ENCODE measurements at regions of chr10 and their contacts with region 1.

Region 1: DNA sequence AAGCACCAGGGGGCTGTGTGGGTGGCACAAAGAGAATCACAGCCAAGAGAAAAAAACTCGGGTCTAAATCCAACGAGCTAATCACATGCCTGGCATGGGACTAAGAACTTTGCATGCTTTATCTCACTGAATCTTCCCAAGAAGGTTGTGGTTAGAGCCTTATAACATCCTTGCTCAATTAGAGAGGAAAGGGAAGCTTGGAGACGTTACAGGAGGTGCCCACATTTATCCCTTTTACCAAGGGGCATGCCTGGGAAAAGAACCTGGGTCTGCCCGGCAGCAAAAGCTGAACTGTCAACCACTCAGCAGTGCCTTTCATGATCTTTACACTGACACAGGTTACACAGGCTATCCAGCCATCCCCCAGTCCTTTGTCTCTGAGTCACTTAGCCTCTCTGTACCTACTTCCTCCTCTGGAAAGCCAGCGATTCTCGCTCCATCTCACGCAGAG is 190.1 kb downstream of the PRPF18 start:
- DNase-seq: no peak

Region 2: GRCh38 chr10:13195016-13195415 is 581.9 kb before region 1 on chr10:
- intact Hi-C with region 1: no loop called
- DNase-seq: no peak

Region 3: DNA sequence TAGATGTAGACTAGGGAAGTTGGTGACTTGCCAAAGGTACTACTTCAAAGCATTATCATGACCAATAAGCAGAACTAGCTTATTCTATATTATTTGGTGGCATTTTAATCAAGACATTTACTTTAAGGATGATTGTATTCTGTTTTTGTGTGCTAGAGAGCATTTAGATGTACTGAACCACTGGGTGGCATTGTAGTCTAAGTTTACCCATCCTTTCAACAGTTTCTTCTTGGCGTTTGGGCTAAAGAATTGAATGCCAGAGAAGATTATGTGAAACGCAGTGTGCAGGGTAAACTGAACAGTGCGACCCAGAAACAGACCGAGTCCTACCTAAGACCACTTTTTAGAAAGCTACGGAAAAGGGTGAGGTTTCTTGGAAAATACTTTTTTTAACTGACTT is 163.4 kb before region 1 on chr10:
- intact Hi-C with region 1: loop called (anchors 2 kb)
- DNase-seq: no peak

Region 4: GRCh38 chr10:13661256-13661655 is 115.6 kb before region 1 on chr10:
- intact Hi-C with region 1: loop called (anchors 1 kb)
- DNase-seq: no peak

Region 5: DNA sequence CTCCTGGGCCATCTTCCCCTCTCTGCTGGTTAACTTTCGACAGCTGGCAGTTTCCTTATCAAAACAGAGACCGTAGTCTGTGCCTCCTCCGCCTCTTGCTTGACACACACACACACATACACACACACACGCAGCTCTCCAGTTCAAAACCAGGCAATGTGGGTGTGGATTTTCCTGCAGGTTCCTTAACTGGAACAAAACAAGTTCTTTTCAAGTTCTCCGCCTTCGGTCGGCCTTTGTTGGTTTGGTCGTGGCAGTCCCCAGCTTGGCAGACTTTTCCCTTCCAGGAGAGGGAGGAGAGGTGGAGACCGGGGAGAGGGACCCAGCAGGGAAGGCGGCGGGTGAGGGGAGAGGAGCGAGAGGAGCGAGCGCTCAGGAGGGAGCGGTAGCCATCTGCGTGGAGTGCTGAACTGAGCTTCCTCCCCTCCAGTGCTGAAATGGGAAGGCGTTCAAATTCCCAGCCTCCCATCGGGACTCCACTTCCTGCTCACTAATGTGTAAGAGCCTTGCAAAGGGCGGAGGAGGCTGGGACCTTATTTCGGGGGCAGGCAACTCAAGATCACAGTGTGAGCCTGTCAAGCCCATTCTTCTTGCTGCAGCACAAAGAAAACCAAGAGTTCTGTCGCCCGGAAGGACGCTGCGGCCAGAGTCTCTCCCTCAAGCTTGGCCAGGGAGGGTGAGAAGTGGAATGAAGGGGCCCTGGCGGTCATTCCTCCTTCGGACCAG is 69.6 kb before region 1 on chr10:
- intact Hi-C with region 1: loop called (anchors 5 kb)
- DNase-seq: peak; percentile 91

Region 6: DNA sequence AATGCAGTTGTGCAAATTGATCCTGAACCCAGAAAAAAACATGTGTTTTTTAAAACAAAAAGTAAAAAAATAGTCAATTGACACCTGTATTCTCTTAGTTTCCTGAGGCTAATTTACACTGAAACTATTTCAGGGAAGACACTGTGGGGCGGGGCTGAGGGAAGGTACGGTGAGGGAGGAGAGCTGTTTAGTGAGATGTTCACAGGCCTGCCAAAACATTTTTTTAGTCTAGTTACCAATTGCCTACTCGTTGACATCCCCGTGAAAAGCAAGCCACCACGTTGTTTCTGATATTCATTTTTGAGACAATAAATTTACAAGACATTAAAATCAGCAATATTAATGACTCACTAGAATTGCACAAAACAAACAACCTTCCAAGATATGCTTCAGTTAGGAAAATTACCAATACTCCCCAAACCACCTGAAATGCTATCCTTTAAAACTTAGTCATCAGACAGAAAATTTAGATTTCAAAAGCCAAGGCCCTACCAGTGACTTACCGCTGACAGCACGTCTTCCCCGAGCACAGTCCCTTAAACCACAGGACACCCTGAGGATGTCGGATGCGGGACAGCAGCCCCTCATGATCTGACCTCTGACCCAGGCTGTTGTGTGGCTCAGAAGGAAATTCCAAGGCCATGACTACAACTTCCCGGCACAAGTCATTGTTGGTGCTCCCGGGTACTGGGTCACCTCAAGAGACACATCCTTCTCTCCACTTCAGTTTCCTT is 89.0 kb after region 1 on chr10:
- intact Hi-C with region 1: no loop called
- DNase-seq: peak; percentile 69

Region 7: GRCh38 chr10:13894412-13895093 is 117.7 kb after region 1 on chr10:
- intact Hi-C with region 1: no loop called
- DNase-seq: no peak